ENCODE measurements at regions of chr6 and their contacts with region 1.

Region 1: GRCh38 chr6:168826726-168827585 is 386.0 kb downstream of the SMOC2 start:
- DNase-seq: no peak
- ATAC-seq: no peak
- H3K4me3 ChIP-seq: no peak overlapping the region
- H3K27ac ChIP-seq: no peak overlapping the region
- H3K4me1 ChIP-seq: no peaks in the 10 kb centered on the region
- H3K27me3 ChIP-seq: no peaks in the 10 kb centered on the region
- CTCF ChIP-seq: no peak

Region 2: GRCh38 chr6:168746013-168746412 is 80.9 kb before region 1 on chr6:
- CTCF ChIA-PET with region 1: no interaction called
- POLR2A ChIA-PET with region 1: no interaction called
- in situ Hi-C with region 1: no loop called
- intact Hi-C with region 1: loop called (anchors 1 kb)
- DNase-seq: no peak
- ATAC-seq: no peak
- H3K4me3 ChIP-seq: no peak overlapping the region
- H3K27ac ChIP-seq: no peak overlapping the region
- H3K4me1 ChIP-seq: no peaks in the 10 kb centered on the region
- H3K27me3 ChIP-seq: no peaks in the 10 kb centered on the region
- CTCF ChIP-seq: no peak